H1 (cell line): ENCODE measurements at regions of chr17 and their contacts with region 1.

Region 1: GRCh38 chr17:80454557-80455335 is 21.7 kb downstream of the NPTX1 start:
- DNase-seq: peak; percentile 86 to 93
- H3K4me3 ChIP-seq: peak overlapping the region; percentile 76 to 81 (median 78)
- H3K27ac ChIP-seq: peak overlapping the region; percentile 84
- H3K4me1 ChIP-seq: peaks cover 0 to 7% (median 3%) of the 10 kb centered on the region in 4 experiments; a peak in 4 of 7 replicates
- H3K27me3 ChIP-seq: peaks cover 0 to 13% (median 9%) of the 10 kb centered on the region in 4 experiments; a peak in 5 of 7 replicates
- CTCF ChIP-seq: no peak
- EP300 ChIP-seq: no peak; a peak in 1 of 3 replicates
- POLR2A ChIP-seq: peak in 1 of 2 experiments; percentile 95; a peak in 2 of 3 replicates
- RAD21 ChIP-seq: 0 out of 4 replicates have a peak, but pooled peaks of 1 of the 2 experiments have one; percentile 4

Region 2: GRCh38 chr17:80441133-80441578 is 13.6 kb before region 1 on chr17:
- CTCF ChIA-PET with region 1: interaction called, 3 read pairs
- POLR2A ChIA-PET with region 1: interaction called, 35 read pairs
- DNase-seq: peak in 1 of 2 experiments; percentile 95
- H3K4me3 ChIP-seq: no peak overlapping the region
- H3K27ac ChIP-seq: no peak overlapping the region
- H3K4me1 ChIP-seq: peaks cover 3 to 11% (median 8%) of the 10 kb centered on the region in 4 experiments; a peak in 6 of 7 replicates
- H3K27me3 ChIP-seq: peaks cover 0 to 7% (median 0%) of the 10 kb centered on the region in 4 experiments; a peak in 3 of 7 replicates
- CTCF ChIP-seq: no peak
- EP300 ChIP-seq: no peak
- POLR2A ChIP-seq: no peak
- RAD21 ChIP-seq: peak in 1 of 2 experiments; percentile 20; a peak in 1 of 4 replicates

Region 3: GRCh38 chr17:80474231-80474960 is 19.6 kb after region 1 on chr17:
- CTCF ChIA-PET with region 1: interaction called, 9 read pairs
- POLR2A ChIA-PET with region 1: interaction called, 18 read pairs
- DNase-seq: no peak
- H3K4me3 ChIP-seq: peak overlapping the region in 1 of 4 experiments; percentile 60; a peak in 4 of 8 replicates
- H3K27ac ChIP-seq: no peak overlapping the region
- H3K4me1 ChIP-seq: peaks cover 0 to 26% (median 11%) of the 10 kb centered on the region in 4 experiments; a peak in 5 of 7 replicates
- H3K27me3 ChIP-seq: peaks cover 64 to 86% (median 80%) of the 10 kb centered on the region in 4 experiments
- CTCF ChIP-seq: peak in 1 of 3 experiments; percentile 18; a peak in 1 of 4 replicates
- EP300 ChIP-seq: no peak
- POLR2A ChIP-seq: no peak
- RAD21 ChIP-seq: 0 out of 4 replicates have a peak, but pooled peaks of 1 of the 2 experiments have one; percentile 12